ENCODE measurements at regions of chr10 and their contacts with region 1.

Region 1: GRCh38 chr10:14712991-14713497 is 61.7 kb downstream of the FAM107B start:
- DNase-seq: peak; percentile 54 to 90
- H3K4me3 ChIP-seq: no peak overlapping the region; the same call in 1 of the 2 replicates
- H3K27ac ChIP-seq: peak overlapping the region; percentile 76
- H3K4me1 ChIP-seq: peaks cover 20% of the 10 kb centered on the region
- H3K27me3 ChIP-seq: no peaks in the 10 kb centered on the region
- CTCF ChIP-seq: no peak

Region 2: GRCh38 chr10:14653271-14654228 is 59.5 kb before region 1 on chr10:
- CTCF ChIA-PET with region 1: interaction called, 3 read pairs
- POLR2A ChIA-PET with region 1: no interaction called
- intact Hi-C with region 1: loop called (anchors 1 kb)
- DNase-seq: peak; percentile 80 to 96
- H3K4me3 ChIP-seq: peak overlapping the region; percentile 51
- H3K27ac ChIP-seq: peak overlapping the region; percentile 92
- H3K4me1 ChIP-seq: peaks cover 73% of the 10 kb centered on the region
- H3K27me3 ChIP-seq: no peaks in the 10 kb centered on the region
- CTCF ChIP-seq: no peak

Region 3: GRCh38 chr10:14723052-14723689 is 10.1 kb after region 1 on chr10:
- CTCF ChIA-PET with region 1: no interaction called
- POLR2A ChIA-PET with region 1: no interaction called
- intact Hi-C with region 1: no loop called
- DNase-seq: no peak
- H3K4me3 ChIP-seq: no peak overlapping the region
- H3K27ac ChIP-seq: no peak overlapping the region
- H3K4me1 ChIP-seq: no peaks in the 10 kb centered on the region
- H3K27me3 ChIP-seq: no peaks in the 10 kb centered on the region
- CTCF ChIP-seq: no peak

Region 4: GRCh38 chr10:14748470-14748869 is 35.4 kb after region 1 on chr10:
- CTCF ChIA-PET with region 1: no interaction called
- POLR2A ChIA-PET with region 1: interaction called, 6 read pairs
- intact Hi-C with region 1: loop called (anchors 1 kb)
- DNase-seq: peak; percentile 92 to 93
- H3K4me3 ChIP-seq: no peak overlapping the region
- H3K27ac ChIP-seq: peak overlapping the region; percentile 80
- H3K4me1 ChIP-seq: peaks cover 27% of the 10 kb centered on the region
- H3K27me3 ChIP-seq: no peaks in the 10 kb centered on the region
- CTCF ChIP-seq: no peak